ENCODE measurements at regions of chr7 and their contacts with region 1.

Region 1: DNA sequence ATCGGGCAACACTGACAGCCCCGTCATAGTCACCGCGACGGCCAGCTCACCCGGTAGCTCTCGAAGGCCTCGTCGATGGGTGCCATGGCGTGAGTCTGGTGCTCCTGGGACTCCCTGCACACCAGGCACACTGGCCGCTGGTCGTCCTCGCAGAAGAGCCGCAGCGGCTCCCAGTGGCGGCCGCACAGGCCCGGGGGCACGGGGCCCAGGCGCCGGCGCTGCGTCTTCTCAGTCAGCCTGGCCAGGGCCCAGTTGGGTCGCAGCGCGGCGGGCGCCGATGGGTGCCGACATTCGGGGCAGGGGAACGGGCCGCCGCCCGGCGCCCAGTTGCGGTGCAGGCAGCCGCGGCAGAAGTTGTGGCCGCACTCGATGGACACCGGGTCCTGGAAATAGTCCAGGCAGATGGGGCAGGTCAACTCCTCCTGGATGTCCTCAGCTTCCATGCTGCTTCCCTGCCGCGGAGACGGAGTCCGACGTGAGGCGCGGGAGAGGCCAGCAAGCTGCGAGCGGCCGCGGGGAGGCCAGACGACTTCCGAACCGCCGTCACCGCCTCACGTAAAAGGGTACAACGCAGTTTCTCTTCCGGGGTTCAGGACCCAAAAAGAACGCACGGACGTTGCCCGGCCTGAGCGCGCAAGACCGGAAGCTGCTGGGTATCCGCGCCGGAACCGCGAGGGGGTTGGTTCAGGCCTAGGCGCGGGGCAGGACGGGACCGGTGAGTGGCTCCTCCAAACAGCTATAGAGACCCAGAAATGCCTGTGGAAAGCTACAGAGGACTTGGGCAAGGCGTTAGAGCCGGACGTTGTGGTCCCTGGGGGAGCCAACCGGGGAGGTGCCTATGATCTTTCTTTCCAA is at the start of gene TRIM4:
- DNase-seq: peak; percentile 81 to 93 (median 85)
- ATAC-seq: peak; percentile 98
- H3K4me3 ChIP-seq: peak within 1 kb of the TSS; percentile 70 to 80
- H3K4me3 Mint-ChIP-seq: peak within 1 kb of the TSS; percentile 93 to 95 (median 94)
- H3K27ac ChIP-seq: peak within 1 kb of the TSS; percentile 88
- H3K27ac Mint-ChIP-seq: peak within 1 kb of the TSS; percentile 92 to 97
- H3K4me1 ChIP-seq: peaks cover 15 to 29% of the 10 kb centered on the region in 2 experiments
- H3K4me1 Mint-ChIP-seq: peaks cover 49 to 64% (median 56%) of the 10 kb centered on the region in 3 donors
- H3K27me3 ChIP-seq: no peaks in the 10 kb centered on the region
- H3K27me3 Mint-ChIP-seq: no peaks in the 10 kb centered on the region
- total RNA-seq, gene TRIM4: 35.8 to 60.9 (median 55.9) TPM

Region 2: DNA sequence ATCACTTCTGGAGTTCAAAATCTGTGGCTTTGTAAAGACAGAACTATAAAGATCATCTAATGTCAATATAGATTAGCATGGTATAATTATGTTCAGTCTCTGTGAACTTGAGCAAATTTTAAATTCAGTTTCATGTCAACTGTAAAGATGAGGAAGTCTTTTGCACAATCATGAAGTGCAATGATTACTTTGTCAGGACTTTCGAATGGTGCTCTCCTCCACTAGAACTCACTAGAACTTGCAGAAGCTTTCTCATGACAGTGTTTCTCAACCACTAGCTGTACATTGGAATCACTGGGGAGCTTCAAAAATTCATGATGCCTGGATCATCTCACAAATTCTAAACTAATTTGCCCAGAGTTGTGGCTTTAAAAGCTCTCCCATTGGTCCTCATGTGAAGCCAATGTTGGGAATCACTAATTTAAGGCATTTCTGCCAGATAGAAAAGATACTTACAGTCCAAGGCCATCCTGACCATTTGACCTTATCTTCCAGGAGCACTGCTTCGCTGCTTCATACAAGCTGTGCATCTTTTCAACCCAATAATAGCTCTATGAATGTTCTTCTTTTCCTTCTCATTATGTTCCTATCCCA is 55.2 kb before region 1 on chr7:
- CTCF ChIA-PET with region 1: no interaction called
- POLR2A ChIA-PET with region 1: no interaction called
- DNase-seq: no peak
- ATAC-seq: no peak
- H3K4me3 ChIP-seq: no peak overlapping the region
- H3K4me3 Mint-ChIP-seq: no peak overlapping the region
- H3K27ac ChIP-seq: no peak overlapping the region
- H3K27ac Mint-ChIP-seq: no peak overlapping the region
- H3K4me1 ChIP-seq: no peaks in the 10 kb centered on the region
- H3K4me1 Mint-ChIP-seq: no peaks in the 10 kb centered on the region
- H3K27me3 ChIP-seq: peaks cover 0 to 5% of the 10 kb centered on the region in 2 experiments
- H3K27me3 Mint-ChIP-seq: peaks cover 12 to 29% of the 10 kb centered on the region in 2 donors

Region 3: DNA sequence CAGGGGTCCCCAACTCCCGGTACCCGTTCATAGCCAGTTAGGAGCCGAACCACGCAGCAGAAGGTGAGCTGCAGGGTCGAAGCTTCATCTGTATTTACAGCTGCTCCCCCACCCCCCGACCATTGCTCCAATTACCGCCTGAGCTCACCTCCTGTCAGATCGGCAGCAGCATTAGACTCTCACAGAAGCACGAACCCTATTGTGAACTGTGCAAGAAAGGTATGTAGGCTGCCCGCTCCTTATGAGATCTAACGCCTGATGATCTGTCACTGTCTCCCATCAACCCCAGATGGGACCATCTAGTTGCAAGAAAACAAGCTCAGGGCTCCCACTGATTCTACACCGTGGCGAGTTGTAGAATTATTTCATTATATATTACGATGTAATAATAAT is 71.3 kb after region 1 on chr7:
- CTCF ChIA-PET with region 1: interaction called, 14 to 19 read pairs
- POLR2A ChIA-PET with region 1: no interaction called
- DNase-seq: peak in 1 of 35 experiments; percentile 12
- ATAC-seq: peak in 2 of 4 experiments; percentile 5 to 26
- H3K4me3 ChIP-seq: no peak overlapping the region
- H3K4me3 Mint-ChIP-seq: no peak overlapping the region
- H3K27ac ChIP-seq: no peak overlapping the region
- H3K27ac Mint-ChIP-seq: no peak overlapping the region
- H3K4me1 ChIP-seq: peaks cover 0 to 4% of the 10 kb centered on the region in 2 experiments
- H3K4me1 Mint-ChIP-seq: peaks cover 0 to 3% (median 2%) of the 10 kb centered on the region in 3 donors
- H3K27me3 ChIP-seq: peaks cover 0 to 20% of the 10 kb centered on the region in 2 experiments
- H3K27me3 Mint-ChIP-seq: peaks cover 0 to 5% of the 10 kb centered on the region in 2 donors

Region 4: GRCh38 chr7:100015232-100016209 is 96.3 kb after region 1 on chr7 and contains the start of gene ZKSCAN1:
- CTCF ChIA-PET with region 1: no interaction called
- POLR2A ChIA-PET with region 1: no interaction called
- DNase-seq: peak; percentile 65 to 94 (median 80)
- ATAC-seq: peak; percentile 94 to 98 (median 96)
- H3K4me3 ChIP-seq: peak within 1 kb of the TSS; percentile 90 to 96
- H3K4me3 Mint-ChIP-seq: peak within 1 kb of the TSS; percentile 91 to 94 (median 92)
- H3K27ac ChIP-seq: peak within 1 kb of the TSS; percentile 89
- H3K27ac Mint-ChIP-seq: peak within 1 kb of the TSS; percentile 92 to 95
- H3K4me1 ChIP-seq: peaks cover 10 to 27% of the 10 kb centered on the region in 2 experiments
- H3K4me1 Mint-ChIP-seq: peaks cover 41 to 52% (median 47%) of the 10 kb centered on the region in 3 donors
- H3K27me3 ChIP-seq: peaks cover 0 to 2% of the 10 kb centered on the region in 2 experiments
- H3K27me3 Mint-ChIP-seq: no peaks in the 10 kb centered on the region
- total RNA-seq, gene ZKSCAN1: 60.7 to 94.0 (median 86.8) TPM

Measured in T-cell (primary cell).